ENCODE measurements at regions of chr5 and their contacts with region 1.

Region 1: DNA sequence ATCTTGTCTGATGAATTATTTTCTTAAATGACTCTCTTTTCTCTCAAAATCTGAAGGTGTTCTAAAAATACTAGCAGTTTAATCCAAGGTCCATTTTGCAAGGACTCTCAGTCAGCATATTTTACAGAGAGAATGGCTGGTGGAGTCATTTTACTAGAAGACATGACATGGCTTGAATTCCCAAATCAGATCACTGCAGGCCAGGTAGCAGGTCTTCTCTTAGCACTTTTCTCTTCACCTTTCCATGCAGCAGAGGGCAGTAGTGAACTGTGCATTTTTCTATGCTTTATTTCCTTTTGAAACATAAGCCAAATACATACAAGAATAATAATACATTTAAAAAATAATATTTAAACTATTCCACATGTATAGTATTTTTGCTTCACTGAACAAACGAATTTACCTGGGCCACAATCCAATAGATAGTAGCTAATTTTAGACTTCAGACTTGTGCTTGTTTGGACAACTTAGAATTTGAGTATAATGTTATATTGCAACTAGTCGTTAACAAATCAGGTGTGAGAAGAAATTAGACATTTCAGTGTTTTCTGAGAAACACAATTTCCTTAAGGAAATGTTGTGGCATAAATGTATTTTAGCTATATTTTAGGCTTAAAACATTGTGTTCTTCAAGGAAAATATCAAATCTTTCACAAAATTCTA is 289.4 kb upstream of the DAB2 start:
- DNase-seq: peak; percentile 24 to 64 (median 34)
- ATAC-seq: peak; percentile 72
- H3K4me3 ChIP-seq: no peak overlapping the region
- H3K27ac ChIP-seq: no peak overlapping the region
- H3K4me1 ChIP-seq: no peaks in the 10 kb centered on the region
- H3K27me3 ChIP-seq: no peaks in the 10 kb centered on the region
- CTCF ChIP-seq: peak; percentile 39 to 75 (median 51); a peak in 5 of 6 replicates
- EP300 ChIP-seq: no peak
- POLR2A ChIP-seq: no peak
- RAD21 ChIP-seq: peak; percentile 76 to 79

Region 2: GRCh38 chr5:39730011-39730410 is 15.8 kb after region 1 on chr5:
- CTCF ChIA-PET with region 1: no interaction called
- POLR2A ChIA-PET with region 1: no interaction called
- in situ Hi-C with region 1: no loop called
- intact Hi-C with region 1: no loop called
- DNase-seq: no peak
- ATAC-seq: no peak
- H3K4me3 ChIP-seq: no peak overlapping the region
- H3K27ac ChIP-seq: no peak overlapping the region
- H3K4me1 ChIP-seq: no peaks in the 10 kb centered on the region
- H3K27me3 ChIP-seq: no peaks in the 10 kb centered on the region
- CTCF ChIP-seq: no peak
- EP300 ChIP-seq: no peak
- POLR2A ChIP-seq: no peak
- RAD21 ChIP-seq: no peak

Region 3: DNA sequence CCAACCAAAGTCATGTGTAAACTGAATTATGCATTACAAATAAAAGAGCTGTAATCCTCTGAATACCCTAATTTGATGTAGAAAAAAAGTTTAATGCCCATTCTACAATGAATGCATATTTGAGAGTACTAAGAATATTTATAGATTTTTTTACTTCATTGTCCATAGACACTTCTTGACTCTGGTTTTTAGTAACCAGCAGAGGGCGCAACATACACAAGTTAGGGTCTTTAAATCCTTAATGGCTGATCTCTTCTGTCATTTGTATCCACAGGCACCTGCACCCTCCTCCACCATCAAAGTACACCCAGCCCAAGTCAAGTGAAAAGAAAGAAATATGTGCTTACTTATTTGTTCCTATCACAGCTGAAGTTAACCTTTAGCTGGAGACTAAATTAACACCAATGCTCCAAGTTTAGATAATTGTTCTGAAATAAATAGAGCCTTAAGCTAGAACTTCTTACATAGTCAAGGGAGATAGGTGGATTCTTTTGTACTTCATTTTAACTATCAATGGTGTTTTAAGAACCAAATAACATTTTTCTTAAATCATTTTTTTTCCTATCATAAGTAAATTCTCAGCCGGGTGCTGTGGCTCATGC is 234.8 kb after region 1 on chr5:
- CTCF ChIA-PET with region 1: no interaction called
- POLR2A ChIA-PET with region 1: no interaction called
- in situ Hi-C with region 1: no loop called
- intact Hi-C with region 1: loop called (anchors 5 kb)
- DNase-seq: peak; percentile 42 to 70 (median 51)
- ATAC-seq: peak; percentile 85
- H3K4me3 ChIP-seq: no peak overlapping the region
- H3K27ac ChIP-seq: no peak overlapping the region
- H3K4me1 ChIP-seq: no peaks in the 10 kb centered on the region
- H3K27me3 ChIP-seq: no peaks in the 10 kb centered on the region
- CTCF ChIP-seq: peak; percentile 37 to 70 (median 53); a peak in 4 of 6 replicates
- EP300 ChIP-seq: no peak
- POLR2A ChIP-seq: no peak
- RAD21 ChIP-seq: peak; percentile 79 to 80

Region 4: GRCh38 chr5:40700116-40700782 is 986.1 kb after region 1 on chr5:
- CTCF ChIA-PET with region 1: no interaction called
- POLR2A ChIA-PET with region 1: no interaction called
- in situ Hi-C with region 1: loop called (anchors 10 kb)
- intact Hi-C with region 1: no loop called
- DNase-seq: no peak
- ATAC-seq: peak; percentile 49
- H3K4me3 ChIP-seq: no peak overlapping the region
- H3K27ac ChIP-seq: no peak overlapping the region
- H3K4me1 ChIP-seq: no peaks in the 10 kb centered on the region
- H3K27me3 ChIP-seq: no peaks in the 10 kb centered on the region; a peak in 1 of 5 replicates
- CTCF ChIP-seq: no peak
- EP300 ChIP-seq: no peak
- POLR2A ChIP-seq: no peak
- RAD21 ChIP-seq: no peak

Region 5: GRCh38 chr5:40736103-40736875 is 1022.1 kb after region 1 on chr5:
- CTCF ChIA-PET with region 1: interaction called, 9 read pairs
- POLR2A ChIA-PET with region 1: no interaction called
- in situ Hi-C with region 1: no loop called
- intact Hi-C with region 1: loop called (anchors 2 kb)
- DNase-seq: peak; percentile 55 to 73 (median 62)
- ATAC-seq: peak; percentile 92
- H3K4me3 ChIP-seq: no peak overlapping the region
- H3K27ac ChIP-seq: no peak overlapping the region
- H3K4me1 ChIP-seq: peaks cover 0 to 7% of the 10 kb centered on the region in 2 experiments; a peak in 2 of 5 replicates
- H3K27me3 ChIP-seq: no peaks in the 10 kb centered on the region
- CTCF ChIP-seq: peak; percentile 57 to 87 (median 65); a peak in 5 of 6 replicates
- EP300 ChIP-seq: no peak
- POLR2A ChIP-seq: no peak
- RAD21 ChIP-seq: peak; percentile 73 to 86